ENCODE measurements at regions of chr9 and their contacts with region 1.

Region 1: GRCh38 chr9:126490871-126491567 is 122.7 kb upstream of the LMX1B start:
- DNase-seq: peak; percentile 69
- ATAC-seq: peak; percentile 39
- H3K4me3 Mint-ChIP-seq: no peak overlapping the region
- H3K27ac Mint-ChIP-seq: no peak overlapping the region
- H3K4me1 Mint-ChIP-seq: peaks cover 10% of the 10 kb centered on the region
- H3K27me3 Mint-ChIP-seq: no peaks in the 10 kb centered on the region

Region 2: GRCh38 chr9:125407974-125408900 is 1082.8 kb before region 1 on chr9:
- CTCF ChIA-PET with region 1: interaction called, 7 read pairs
- POLR2A ChIA-PET with region 1: no interaction called
- intact Hi-C with region 1: loop called (anchors 2 to 10 kb)
- DNase-seq: peak; percentile 89
- ATAC-seq: peak; percentile 76
- H3K4me3 Mint-ChIP-seq: peak overlapping the region; percentile 62
- H3K27ac Mint-ChIP-seq: no peak overlapping the region
- H3K4me1 Mint-ChIP-seq: peaks cover 13% of the 10 kb centered on the region
- H3K27me3 Mint-ChIP-seq: peaks cover 27% of the 10 kb centered on the region

Region 3: DNA sequence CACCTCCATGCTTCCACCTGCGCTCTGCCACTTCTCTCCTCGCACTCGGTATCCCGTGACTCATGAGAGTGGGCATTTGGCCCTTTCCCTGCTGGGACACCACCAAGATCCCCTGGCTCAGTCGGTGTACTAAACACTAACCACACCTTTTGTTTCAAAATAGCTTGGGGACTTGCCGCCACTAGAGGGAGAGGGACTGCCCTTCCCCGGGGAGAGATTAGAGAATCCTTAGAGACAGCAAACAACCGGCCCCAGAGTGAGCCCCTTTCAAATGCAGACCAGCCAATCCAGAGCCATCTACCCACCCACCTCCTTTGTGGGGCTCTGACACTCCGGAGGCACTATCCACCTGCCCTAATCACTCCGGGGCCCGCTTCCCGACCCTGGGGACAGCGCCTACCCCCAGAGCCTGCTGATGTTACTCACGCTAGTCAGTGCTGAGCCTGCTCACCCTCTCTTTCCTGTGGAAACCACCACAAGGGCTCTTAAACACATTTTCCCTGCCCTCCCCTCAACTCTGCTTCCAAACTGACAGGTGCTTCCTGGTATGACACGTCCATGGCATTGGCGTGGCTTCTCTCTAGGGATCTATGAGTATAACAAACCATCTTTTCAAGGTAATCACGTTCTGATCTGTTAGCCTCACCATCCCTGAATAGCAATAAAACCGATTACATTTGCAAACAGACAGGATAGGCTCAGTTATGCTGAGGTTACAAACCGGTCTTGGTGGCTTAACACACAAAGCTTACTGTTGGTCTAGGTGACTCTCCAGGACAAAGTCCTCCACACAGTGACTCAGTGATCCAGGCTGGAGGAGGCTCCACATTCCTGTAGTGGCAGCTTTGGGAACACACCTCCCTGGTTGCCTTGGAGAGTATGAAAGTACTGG is 344.5 kb before region 1 on chr9:
- CTCF ChIA-PET with region 1: no interaction called
- POLR2A ChIA-PET with region 1: no interaction called
- intact Hi-C with region 1: loop called in 1 of 2 experiments (anchors 2 kb)
- DNase-seq: peak; percentile 55
- ATAC-seq: peak; percentile 85
- H3K4me3 Mint-ChIP-seq: no peak overlapping the region
- H3K27ac Mint-ChIP-seq: no peak overlapping the region
- H3K4me1 Mint-ChIP-seq: peaks cover 8% of the 10 kb centered on the region
- H3K27me3 Mint-ChIP-seq: peaks cover 32% of the 10 kb centered on the region

Region 4: GRCh38 chr9:126301985-126302603 is 188.9 kb before region 1 on chr9:
- CTCF ChIA-PET with region 1: interaction called, 11 read pairs
- POLR2A ChIA-PET with region 1: no interaction called
- intact Hi-C with region 1: loop called (anchors 1 kb)
- DNase-seq: peak; percentile 69
- ATAC-seq: peak; percentile 65
- H3K4me3 Mint-ChIP-seq: no peak overlapping the region
- H3K27ac Mint-ChIP-seq: no peak overlapping the region
- H3K4me1 Mint-ChIP-seq: peaks cover 2% of the 10 kb centered on the region
- H3K27me3 Mint-ChIP-seq: no peaks in the 10 kb centered on the region

Region 5: GRCh38 chr9:126398403-126399058 is 92.5 kb before region 1 on chr9:
- CTCF ChIA-PET with region 1: interaction called, 20 read pairs
- POLR2A ChIA-PET with region 1: no interaction called
- intact Hi-C with region 1: loop called in 1 of 2 experiments (anchors 1 kb)
- DNase-seq: peak; percentile 86
- ATAC-seq: peak; percentile 30
- H3K4me3 Mint-ChIP-seq: no peak overlapping the region
- H3K27ac Mint-ChIP-seq: no peak overlapping the region
- H3K4me1 Mint-ChIP-seq: peaks cover 48% of the 10 kb centered on the region
- H3K27me3 Mint-ChIP-seq: no peaks in the 10 kb centered on the region

Region 6: DNA sequence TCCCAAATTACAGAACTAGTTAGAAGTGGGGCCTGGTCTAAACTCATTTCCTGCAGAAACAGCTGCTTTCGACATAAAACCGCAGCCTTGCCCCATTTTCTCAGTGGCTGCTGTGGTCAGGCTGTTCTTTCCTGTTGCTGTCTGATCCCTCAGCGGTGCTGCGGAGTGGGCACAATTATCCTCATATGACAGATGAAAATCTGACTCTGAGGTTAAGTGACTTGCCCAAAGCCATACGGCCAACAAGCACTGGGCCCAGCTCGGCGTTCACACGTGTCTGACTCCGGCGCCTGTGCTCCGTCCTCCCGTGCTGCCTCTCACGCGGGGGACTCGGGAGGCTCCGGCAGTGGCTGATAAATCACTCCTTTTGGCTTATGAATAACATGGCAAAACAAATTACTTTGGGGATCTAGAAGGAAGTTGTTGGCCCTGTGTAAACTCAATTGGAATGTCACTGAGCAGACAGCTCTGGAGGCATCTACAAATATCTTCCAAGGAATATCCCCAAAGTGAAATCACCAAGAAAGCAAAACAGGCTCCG is 19.9 kb before region 1 on chr9:
- CTCF ChIA-PET with region 1: interaction called, 32 read pairs
- POLR2A ChIA-PET with region 1: no interaction called
- intact Hi-C with region 1: no loop called
- DNase-seq: peak; percentile 89
- ATAC-seq: peak; percentile 92
- H3K4me3 Mint-ChIP-seq: peak overlapping the region; percentile 39
- H3K27ac Mint-ChIP-seq: no peak overlapping the region
- H3K4me1 Mint-ChIP-seq: peaks cover 60% of the 10 kb centered on the region
- H3K27me3 Mint-ChIP-seq: peaks cover 6% of the 10 kb centered on the region

Region 7: GRCh38 chr9:126514047-126514821 is 23.2 kb after region 1 on chr9:
- CTCF ChIA-PET with region 1: no interaction called
- POLR2A ChIA-PET with region 1: no interaction called
- intact Hi-C with region 1: no loop called
- DNase-seq: peak; percentile 76
- ATAC-seq: peak; percentile 50
- H3K4me3 Mint-ChIP-seq: no peak overlapping the region
- H3K27ac Mint-ChIP-seq: no peak overlapping the region
- H3K4me1 Mint-ChIP-seq: peaks cover 28% of the 10 kb centered on the region
- H3K27me3 Mint-ChIP-seq: peaks cover 66% of the 10 kb centered on the region

Region 8: DNA sequence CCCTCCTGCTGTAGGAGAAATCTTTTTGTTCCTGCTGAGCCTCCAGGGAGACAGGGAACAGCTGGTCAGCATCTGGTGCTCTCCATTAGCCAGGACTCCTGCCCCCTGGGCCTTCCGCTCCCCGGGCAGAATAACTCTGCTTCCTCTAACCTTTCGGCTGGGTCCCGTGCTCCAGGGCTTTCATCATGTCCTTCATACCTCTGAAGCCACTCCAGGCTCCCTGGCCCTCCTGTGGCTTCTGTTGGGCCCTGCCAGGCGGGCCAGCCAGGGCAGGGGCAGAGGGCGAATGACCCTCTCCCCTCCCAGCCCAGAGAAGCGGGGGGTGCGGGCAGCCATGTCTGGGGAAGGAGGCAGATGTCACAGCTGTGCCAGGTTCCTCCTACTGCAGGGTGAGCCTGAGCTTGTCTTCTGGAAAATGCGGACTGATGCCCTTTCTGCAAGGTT is 41.0 kb after region 1 on chr9:
- CTCF ChIA-PET with region 1: no interaction called
- POLR2A ChIA-PET with region 1: no interaction called
- intact Hi-C with region 1: no loop called
- DNase-seq: no peak
- ATAC-seq: no peak
- H3K4me3 Mint-ChIP-seq: no peak overlapping the region
- H3K27ac Mint-ChIP-seq: no peak overlapping the region
- H3K4me1 Mint-ChIP-seq: no peaks in the 10 kb centered on the region
- H3K27me3 Mint-ChIP-seq: peaks cover 1% of the 10 kb centered on the region